ENCODE measurements at regions of chr6 and their contacts with region 1.

Region 1: GRCh38 chr6:161694995-161695394 is 421.1 kb upstream of the AGPAT4 start:
- DNase-seq: no peak
- ATAC-seq: peak; percentile 35 to 41
- H3K4me3 ChIP-seq: no peak overlapping the region
- H3K27ac ChIP-seq: no peak overlapping the region
- H3K4me1 ChIP-seq: no peaks in the 10 kb centered on the region
- H3K27me3 ChIP-seq: no peaks in the 10 kb centered on the region

Region 2: DNA sequence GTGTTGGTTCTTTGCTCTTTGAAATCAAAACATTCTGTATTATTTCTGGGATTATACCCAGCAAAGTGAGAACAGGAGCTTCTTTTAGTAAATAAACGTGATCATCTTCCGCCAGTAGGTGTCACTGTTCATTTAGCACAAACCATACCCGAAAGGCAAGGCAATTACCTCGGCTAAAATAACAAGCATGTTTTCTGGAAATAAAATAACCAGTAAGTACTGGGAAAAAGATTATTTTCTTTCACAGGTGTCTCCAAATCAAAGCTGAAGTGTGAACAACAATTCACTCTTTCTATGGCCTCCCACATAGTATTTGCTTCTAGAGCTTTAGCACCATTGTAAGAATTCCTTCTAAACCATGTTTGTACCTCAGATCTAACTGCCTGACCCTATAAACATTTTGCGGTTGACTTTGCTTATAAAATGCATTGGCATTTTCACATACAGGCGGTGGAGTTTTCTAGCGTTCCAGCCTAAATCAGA is 276.5 kb before region 1 on chr6:
- intact Hi-C with region 1: loop called in 3 of 4 experiments (anchors 10 kb)
- DNase-seq: no peak
- ATAC-seq: peak in 1 of 2 donors; percentile 60
- H3K4me3 ChIP-seq: no peak overlapping the region
- H3K27ac ChIP-seq: no peak overlapping the region
- H3K4me1 ChIP-seq: peaks cover under 1% of the 10 kb centered on the region
- H3K27me3 ChIP-seq: no peaks in the 10 kb centered on the region

Region 3: DNA sequence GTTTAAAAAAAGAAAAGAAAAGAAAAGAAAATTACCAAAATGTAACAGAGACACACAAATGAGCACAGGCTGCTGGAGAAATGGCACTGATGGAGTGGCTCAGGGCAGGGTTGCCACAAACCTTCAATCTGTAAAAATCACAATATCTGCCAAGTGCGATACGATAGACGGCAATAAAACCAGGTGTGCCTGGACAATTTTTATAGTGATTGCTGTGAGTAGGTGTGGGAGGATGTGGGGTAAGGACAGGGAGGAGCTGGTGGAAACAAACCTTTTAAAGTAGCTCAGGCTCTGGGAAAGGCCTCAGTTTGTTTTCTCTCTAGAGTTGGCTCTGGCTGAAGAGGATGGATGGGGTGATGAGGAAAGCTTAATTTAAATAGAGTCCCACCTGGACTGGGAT is 171.6 kb after region 1 on chr6:
- intact Hi-C with region 1: no loop called
- DNase-seq: no peak
- ATAC-seq: no peak
- H3K4me3 ChIP-seq: no peak overlapping the region
- H3K27ac ChIP-seq: no peak overlapping the region
- H3K4me1 ChIP-seq: no peaks in the 10 kb centered on the region
- H3K27me3 ChIP-seq: no peaks in the 10 kb centered on the region

Measured in right cardiac atrium (tissue), 5 donors.